GM12878 (cell line): ENCODE measurements at regions of chr1 and their contacts with region 1.

Region 1: GRCh38 chr1:47333922-47334764 is 553 bp downstream of the CMPK1 start:
- DNase-seq: no peak
- ATAC-seq: peak; percentile 94
- H3K4me3 ChIP-seq: peak overlapping the region; percentile 71
- H3K27ac ChIP-seq: peak overlapping the region; percentile 82
- H3K4me1 ChIP-seq: peaks cover 3% of the 10 kb centered on the region; the same call in 1 of the 2 replicates
- H3K27me3 ChIP-seq: no peaks in the 10 kb centered on the region
- CTCF ChIP-seq: peak; percentile 6 to 42 (median 32); a peak in 4 of 6 replicates
- EP300 ChIP-seq: no peak
- POLR2A ChIP-seq: peak; percentile 80
- RAD21 ChIP-seq: no peak

Region 2: DNA sequence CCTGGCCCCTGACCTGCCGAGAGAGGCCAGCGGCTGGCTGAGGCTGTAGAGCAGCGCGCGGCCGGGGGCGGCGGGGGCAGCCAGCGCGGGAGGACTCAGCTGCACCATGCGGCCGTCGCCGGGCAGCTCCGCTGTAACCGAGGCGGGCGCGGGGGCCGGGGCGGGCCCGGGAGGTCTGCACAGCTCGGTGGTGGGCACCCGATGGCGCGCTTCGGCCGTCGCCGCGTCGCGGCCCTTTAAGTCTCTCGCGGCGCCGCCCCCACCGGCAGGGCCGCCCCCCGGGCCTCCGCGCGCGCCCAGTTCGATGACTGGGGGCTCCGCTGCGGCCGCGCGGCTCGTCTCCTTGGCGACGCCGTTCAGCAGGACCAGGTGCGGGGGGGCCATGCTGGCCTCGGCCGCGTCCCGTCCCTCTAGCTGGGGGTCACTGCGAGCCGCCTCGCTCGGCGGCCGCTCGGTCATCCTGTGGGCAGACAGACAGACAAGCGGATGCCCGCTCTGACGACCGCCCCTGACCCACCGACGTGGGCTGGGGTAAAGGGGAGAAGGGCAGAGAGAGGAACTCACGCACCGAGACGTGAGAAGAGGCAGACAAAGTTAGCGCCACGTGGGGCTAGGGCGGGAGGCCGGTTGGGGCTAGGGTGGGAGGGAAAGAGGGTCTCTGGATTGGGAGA is 108.6 kb before region 1 on chr1:
- CTCF ChIA-PET with region 1: no interaction called
- POLR2A ChIA-PET with region 1: no interaction called
- RAD21 ChIA-PET with region 1: no interaction called
- SMC1A ChIA-PET with region 1: no interaction called
- in situ Hi-C with region 1: no loop called
- intact Hi-C with region 1: no loop called
- DNase-seq: no peak
- ATAC-seq: no peak; the same call in 2 of the 3 replicates
- H3K4me3 ChIP-seq: no peak overlapping the region
- H3K27ac ChIP-seq: no peak overlapping the region
- H3K4me1 ChIP-seq: no peaks in the 10 kb centered on the region
- H3K27me3 ChIP-seq: peaks cover 11 to 26% of the 10 kb centered on the region in 2 experiments
- CTCF ChIP-seq: no peak
- EP300 ChIP-seq: no peak
- POLR2A ChIP-seq: no peak
- RAD21 ChIP-seq: no peak

Region 3: GRCh38 chr1:47313915-47314664 is 20.1 kb before region 1 on chr1 and contains the start of gene STIL:
- CTCF ChIA-PET with region 1: interaction called, 14 read pairs
- POLR2A ChIA-PET with region 1: interaction called, 19 read pairs
- RAD21 ChIA-PET with region 1: interaction called, 13 read pairs
- SMC1A ChIA-PET with region 1: interaction called, 7 read pairs
- in situ Hi-C with region 1: no loop called
- intact Hi-C with region 1: loop called (anchors 1 kb)
- DNase-seq: peak; percentile 96
- ATAC-seq: peak; percentile 99
- H3K4me3 ChIP-seq: peak within 1 kb of the TSS; percentile 86
- H3K27ac ChIP-seq: peak within 1 kb of the TSS; percentile 94
- H3K4me1 ChIP-seq: no peaks in the 10 kb centered on the region
- H3K27me3 ChIP-seq: no peaks in the 10 kb centered on the region
- CTCF ChIP-seq: no peak
- EP300 ChIP-seq: peak in 1 of 2 experiments; percentile 39; a peak in 1 of 4 replicates
- POLR2A ChIP-seq: peak; percentile 89
- RAD21 ChIP-seq: no peak
- polyA plus RNA-seq, gene STIL: 6.0 to 6.3 TPM

Region 4: DNA sequence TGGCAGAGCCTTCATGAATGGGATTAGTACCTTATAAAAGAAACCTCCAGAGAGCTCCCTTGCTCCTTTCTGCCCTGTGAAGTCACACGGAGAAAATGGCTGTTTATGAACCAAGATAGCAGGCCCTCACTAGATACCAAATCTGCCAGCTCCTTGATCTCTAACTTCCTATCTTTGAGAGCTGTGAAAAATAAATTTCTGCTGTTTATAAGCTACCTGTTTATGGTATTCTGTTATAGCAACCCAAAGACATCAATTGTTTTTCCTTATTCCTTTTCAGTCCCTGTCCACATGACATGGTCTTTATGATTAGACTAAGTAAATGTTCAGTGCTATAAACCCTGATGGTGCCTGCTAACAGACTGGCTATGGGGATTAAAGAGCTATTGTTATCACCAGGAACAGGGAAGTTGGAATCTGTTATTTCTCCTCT is 10.5 kb before region 1 on chr1:
- CTCF ChIA-PET with region 1: interaction called, 6 read pairs
- POLR2A ChIA-PET with region 1: interaction called, 18 read pairs
- RAD21 ChIA-PET with region 1: interaction called, 5 read pairs
- SMC1A ChIA-PET with region 1: interaction called, 7 read pairs
- in situ Hi-C with region 1: no loop called
- intact Hi-C with region 1: no loop called
- DNase-seq: no peak
- ATAC-seq: no peak
- H3K4me3 ChIP-seq: no peak overlapping the region
- H3K27ac ChIP-seq: no peak overlapping the region
- H3K4me1 ChIP-seq: no peaks in the 10 kb centered on the region
- H3K27me3 ChIP-seq: no peaks in the 10 kb centered on the region
- CTCF ChIP-seq: no peak
- EP300 ChIP-seq: no peak
- POLR2A ChIP-seq: no peak
- RAD21 ChIP-seq: no peak

Region 5: DNA sequence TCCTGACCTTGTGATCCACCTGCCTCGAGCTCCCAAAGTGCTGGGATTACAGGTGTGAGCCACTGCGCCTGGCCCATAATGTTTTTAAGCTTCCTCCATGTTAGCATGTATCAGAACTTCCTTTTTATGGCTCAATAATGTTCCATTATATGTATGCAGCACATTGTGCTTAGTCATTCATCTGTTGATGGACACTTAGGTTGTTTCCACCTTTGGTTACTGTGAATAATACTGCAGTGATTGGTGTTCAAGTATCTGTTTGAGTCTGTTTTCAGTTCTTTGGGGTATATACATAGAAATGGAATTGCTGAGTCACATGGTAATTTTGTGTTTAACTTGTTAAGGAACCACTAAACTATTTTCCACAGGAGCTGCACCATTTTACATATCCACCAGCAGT is 17.2 kb after region 1 on chr1:
- CTCF ChIA-PET with region 1: interaction called, 8 read pairs
- POLR2A ChIA-PET with region 1: interaction called, 9 read pairs
- RAD21 ChIA-PET with region 1: interaction called, 12 read pairs
- SMC1A ChIA-PET with region 1: interaction called, 20 read pairs
- in situ Hi-C with region 1: no loop called
- intact Hi-C with region 1: no loop called
- DNase-seq: peak; percentile 72
- ATAC-seq: peak; percentile 98
- H3K4me3 ChIP-seq: no peak overlapping the region
- H3K27ac ChIP-seq: peak overlapping the region; percentile 61
- H3K4me1 ChIP-seq: peaks cover 4% of the 10 kb centered on the region; the same call in 1 of the 2 replicates
- H3K27me3 ChIP-seq: no peaks in the 10 kb centered on the region
- CTCF ChIP-seq: no peak
- EP300 ChIP-seq: no peak
- POLR2A ChIP-seq: no peak
- RAD21 ChIP-seq: no peak

Region 6: DNA sequence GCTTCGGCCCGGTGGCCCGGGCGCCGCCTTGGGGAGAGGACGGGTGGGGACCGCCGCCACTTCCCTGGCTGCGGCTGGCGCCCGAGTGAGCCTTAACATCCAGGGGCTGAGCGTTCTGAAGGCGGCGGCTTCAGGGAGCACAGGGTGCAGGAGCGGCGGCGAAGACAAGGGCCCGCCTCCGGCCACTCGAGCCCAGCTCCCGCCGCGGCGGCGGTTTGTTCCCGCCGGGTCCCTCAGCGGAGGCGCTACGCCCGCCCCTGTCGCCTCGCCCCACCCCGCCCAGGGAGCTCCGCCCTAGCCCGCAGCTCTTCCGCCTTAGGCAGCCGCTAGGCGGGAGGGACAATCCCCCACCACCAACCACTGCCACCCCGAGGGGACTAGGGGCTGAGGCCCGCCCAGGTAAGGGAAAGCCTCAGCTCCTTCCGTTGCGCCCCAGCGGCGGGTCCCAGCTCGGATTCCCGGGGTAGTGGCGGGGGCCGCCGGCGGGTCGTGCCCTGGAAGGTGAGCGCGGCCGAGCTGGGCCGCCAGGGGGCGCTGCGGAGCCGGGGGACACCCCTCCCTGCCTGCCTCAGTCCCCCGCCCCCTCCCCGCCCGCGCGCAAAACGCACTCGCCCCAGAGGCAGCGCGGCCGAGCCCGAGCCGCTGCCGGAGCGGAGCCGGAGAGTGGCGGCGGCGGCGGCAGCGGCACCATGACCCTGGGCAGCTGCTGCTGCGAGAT is 103.5 kb after region 1 on chr1 and contains the start of gene FOXD2:
- CTCF ChIA-PET with region 1: interaction called, 7 read pairs
- POLR2A ChIA-PET with region 1: interaction called, 4 read pairs
- RAD21 ChIA-PET with region 1: interaction called, 7 read pairs
- SMC1A ChIA-PET with region 1: interaction called, 5 read pairs
- in situ Hi-C with region 1: no loop called
- intact Hi-C with region 1: loop called (anchors 10 kb)
- DNase-seq: peak; percentile 59
- ATAC-seq: peak; percentile 84
- H3K4me3 ChIP-seq: peak within 1 kb of the TSS; percentile 88
- H3K27ac ChIP-seq: peak within 1 kb of the TSS; percentile 64
- H3K4me1 ChIP-seq: peaks cover 8% of the 10 kb centered on the region
- H3K27me3 ChIP-seq: peaks cover 12 to 14% of the 10 kb centered on the region in 2 experiments
- CTCF ChIP-seq: peak; percentile 70 to 81 (median 75)
- EP300 ChIP-seq: no peak
- POLR2A ChIP-seq: peak; percentile 70
- RAD21 ChIP-seq: peak; percentile 21; the same call in 1 of the 2 replicates
- polyA plus RNA-seq, gene FOXD2: 0.04 TPM in 1 of 2 experiments, not detected in the other